Activated CD4-positive, alpha-beta memory T cell treated with anti-CD3 and anti-CD28 coated beads, Interleukin-2, amount 10 ng/mL, durations not matched to agents 7 days and 5 days (primary cell): ENCODE measurements at regions of chr10 and their contacts with region 1.

Region 1: DNA sequence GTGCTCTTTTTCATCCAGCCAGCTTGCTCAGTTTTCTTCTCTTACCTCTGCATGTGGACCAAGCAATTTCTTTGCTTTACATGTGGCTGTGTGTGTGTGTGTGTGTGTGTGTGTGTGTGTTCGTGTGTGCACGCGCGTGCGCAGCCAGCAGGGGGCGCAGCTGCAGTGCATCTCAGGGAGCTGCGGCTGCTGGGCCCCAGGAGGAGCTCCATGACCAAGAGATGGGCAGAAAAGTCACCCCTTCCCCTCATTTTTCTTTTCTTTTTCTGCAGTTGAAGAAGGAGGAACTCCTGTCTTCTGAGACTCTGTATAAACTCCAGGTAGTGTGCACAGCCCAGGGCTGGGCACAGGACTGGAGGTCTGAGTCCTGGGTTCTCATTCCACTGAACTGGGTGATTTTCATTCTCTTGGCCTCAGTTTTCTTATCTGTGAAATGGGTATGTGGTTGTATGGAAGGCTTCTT is 41.8 kb downstream of the BLNK start:
- DNase-seq: peak; percentile 71
- H3K4me3 Mint-ChIP-seq: no peak overlapping the region
- H3K27ac Mint-ChIP-seq: no peak overlapping the region
- H3K4me1 Mint-ChIP-seq: no peaks in the 10 kb centered on the region
- H3K27me3 Mint-ChIP-seq: peaks cover 4% of the 10 kb centered on the region

Region 2: GRCh38 chr10:96208271-96208670 is 21.3 kb before region 1 on chr10:
- CTCF ChIA-PET with region 1: interaction called, 13 read pairs
- POLR2A ChIA-PET with region 1: no interaction called
- DNase-seq: no peak
- H3K4me3 Mint-ChIP-seq: no peak overlapping the region
- H3K27ac Mint-ChIP-seq: no peak overlapping the region
- H3K4me1 Mint-ChIP-seq: no peaks in the 10 kb centered on the region
- H3K27me3 Mint-ChIP-seq: peaks cover 7% of the 10 kb centered on the region

Region 3: GRCh38 chr10:96287392-96288105 is 58.0 kb after region 1 on chr10:
- CTCF ChIA-PET with region 1: interaction called, 25 read pairs
- POLR2A ChIA-PET with region 1: no interaction called
- DNase-seq: no peak
- H3K4me3 Mint-ChIP-seq: no peak overlapping the region
- H3K27ac Mint-ChIP-seq: no peak overlapping the region
- H3K4me1 Mint-ChIP-seq: peaks cover 7% of the 10 kb centered on the region
- H3K27me3 Mint-ChIP-seq: peaks cover 19% of the 10 kb centered on the region

Region 4: GRCh38 chr10:96292971-96293920 is 63.6 kb after region 1 on chr10:
- CTCF ChIA-PET with region 1: interaction called, 25 read pairs
- POLR2A ChIA-PET with region 1: no interaction called
- DNase-seq: no peak
- H3K4me3 Mint-ChIP-seq: no peak overlapping the region
- H3K27ac Mint-ChIP-seq: no peak overlapping the region
- H3K4me1 Mint-ChIP-seq: peaks cover 8% of the 10 kb centered on the region
- H3K27me3 Mint-ChIP-seq: peaks cover 44% of the 10 kb centered on the region

Region 5: DNA sequence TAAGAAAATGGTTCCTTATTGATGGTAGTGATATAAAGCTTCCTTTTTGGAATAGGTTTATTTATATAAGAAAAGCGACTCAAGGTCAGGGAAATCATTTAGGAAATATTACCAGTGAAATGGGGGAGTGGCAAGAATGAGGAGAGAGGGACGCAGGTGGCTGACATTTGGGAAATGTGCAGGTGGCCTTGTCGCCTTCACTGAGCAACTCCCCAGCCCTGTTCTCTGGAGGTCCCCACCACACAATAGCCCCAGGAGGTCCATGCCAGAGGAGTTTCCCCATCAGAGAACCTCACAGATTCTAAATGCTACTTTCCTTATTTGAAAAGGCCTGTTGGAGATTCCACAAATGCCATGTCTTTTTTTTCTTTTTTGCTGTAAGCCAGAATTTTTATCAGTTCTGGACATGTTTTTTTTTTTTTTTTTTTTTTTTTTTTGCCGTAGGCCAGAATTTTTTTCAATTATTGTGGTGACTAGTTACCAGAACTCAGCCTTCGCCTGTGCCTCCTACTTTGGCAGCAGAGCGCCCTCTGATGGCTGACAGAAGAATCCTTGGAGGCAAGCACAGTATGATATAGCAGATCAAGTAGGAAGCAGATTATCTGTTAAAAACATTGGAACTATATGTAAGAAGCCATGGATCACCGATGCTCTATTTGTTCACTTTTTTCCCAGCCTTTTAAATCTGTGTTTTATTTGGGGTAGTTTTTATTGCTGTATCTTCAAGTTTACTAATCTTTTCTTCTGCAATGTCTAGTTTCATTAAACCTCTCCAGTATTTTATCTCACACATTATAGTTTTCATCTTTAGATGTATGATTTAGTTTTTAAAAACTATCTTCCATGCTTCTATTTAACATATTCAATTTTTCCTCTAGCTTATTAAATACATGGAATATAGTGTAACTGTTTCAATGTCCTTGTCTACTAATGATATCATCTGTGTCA is 110.6 kb after region 1 on chr10:
- CTCF ChIA-PET with region 1: interaction called, 16 read pairs
- POLR2A ChIA-PET with region 1: no interaction called
- DNase-seq: peak; percentile 57
- H3K4me3 Mint-ChIP-seq: no peak overlapping the region
- H3K27ac Mint-ChIP-seq: no peak overlapping the region
- H3K4me1 Mint-ChIP-seq: peaks cover 3% of the 10 kb centered on the region
- H3K27me3 Mint-ChIP-seq: peaks cover 12% of the 10 kb centered on the region